Calu3 (cell line): ENCODE measurements at regions of chr1 and their contacts with region 1.

Region 1: DNA sequence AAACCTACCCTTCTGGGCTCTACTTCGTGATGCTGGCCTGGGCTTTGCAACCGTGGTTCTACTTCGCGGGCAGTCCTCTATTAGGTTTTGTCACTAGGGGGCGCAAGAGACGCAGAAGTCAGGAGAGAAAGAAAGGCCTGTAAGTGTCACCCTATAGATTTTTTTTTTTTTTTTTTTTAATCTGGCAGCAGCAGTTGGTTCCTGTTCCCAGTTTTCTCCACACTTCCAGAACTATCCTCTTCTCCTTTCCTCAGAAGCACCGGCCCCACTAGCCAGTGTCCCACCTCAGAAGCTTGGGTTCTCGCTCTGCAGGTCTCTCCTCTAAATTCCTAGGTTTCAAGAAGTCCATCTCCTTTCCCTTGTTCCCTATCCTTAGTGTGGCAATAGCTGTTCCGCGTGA is 9.1 kb upstream of the LCE2D start:
- DNase-seq: peak; percentile 82
- H3K4me3 Mint-ChIP-seq: no peak overlapping the region
- H3K27ac Mint-ChIP-seq: no peak overlapping the region
- H3K4me1 Mint-ChIP-seq: no peaks in the 10 kb centered on the region
- H3K27me3 Mint-ChIP-seq: peaks cover 66% of the 10 kb centered on the region
- CTCF ChIP-seq: peak; percentile 87

Region 2: GRCh38 chr1:152415454-152416227 is 238.5 kb before region 1 on chr1:
- CTCF ChIA-PET with region 1: no interaction called
- intact Hi-C with region 1: no loop called
- DNase-seq: no peak
- H3K4me3 Mint-ChIP-seq: no peak overlapping the region
- H3K27ac Mint-ChIP-seq: no peak overlapping the region
- H3K4me1 Mint-ChIP-seq: no peaks in the 10 kb centered on the region
- H3K27me3 Mint-ChIP-seq: peaks cover 82% of the 10 kb centered on the region
- CTCF ChIP-seq: no peak

Region 3: GRCh38 chr1:152735648-152736047 is 81.5 kb after region 1 on chr1:
- CTCF ChIA-PET with region 1: no interaction called
- intact Hi-C with region 1: loop called (anchors 10 kb)
- DNase-seq: peak; percentile 12
- H3K4me3 Mint-ChIP-seq: no peak overlapping the region
- H3K27ac Mint-ChIP-seq: no peak overlapping the region
- H3K4me1 Mint-ChIP-seq: no peaks in the 10 kb centered on the region
- H3K27me3 Mint-ChIP-seq: peaks cover 79% of the 10 kb centered on the region
- CTCF ChIP-seq: peak; percentile 40

Region 4: GRCh38 chr1:152926091-152926490 is 272.0 kb after region 1 on chr1:
- CTCF ChIA-PET with region 1: no interaction called
- intact Hi-C with region 1: loop called (anchors 5 kb)
- DNase-seq: no peak
- H3K4me3 Mint-ChIP-seq: no peak overlapping the region
- H3K27ac Mint-ChIP-seq: no peak overlapping the region
- H3K4me1 Mint-ChIP-seq: peaks cover 13% of the 10 kb centered on the region
- H3K27me3 Mint-ChIP-seq: no peaks in the 10 kb centered on the region
- CTCF ChIP-seq: peak; percentile 43

Region 5: GRCh38 chr1:153032677-153033308 is 378.7 kb after region 1 on chr1:
- CTCF ChIA-PET with region 1: no interaction called
- intact Hi-C with region 1: loop called (anchors 10 kb)
- DNase-seq: peak; percentile 80
- H3K4me3 Mint-ChIP-seq: no peak overlapping the region
- H3K27ac Mint-ChIP-seq: peak overlapping the region; percentile 53
- H3K4me1 Mint-ChIP-seq: peaks cover 25% of the 10 kb centered on the region
- H3K27me3 Mint-ChIP-seq: no peaks in the 10 kb centered on the region
- CTCF ChIP-seq: peak; percentile 67

Region 6: DNA sequence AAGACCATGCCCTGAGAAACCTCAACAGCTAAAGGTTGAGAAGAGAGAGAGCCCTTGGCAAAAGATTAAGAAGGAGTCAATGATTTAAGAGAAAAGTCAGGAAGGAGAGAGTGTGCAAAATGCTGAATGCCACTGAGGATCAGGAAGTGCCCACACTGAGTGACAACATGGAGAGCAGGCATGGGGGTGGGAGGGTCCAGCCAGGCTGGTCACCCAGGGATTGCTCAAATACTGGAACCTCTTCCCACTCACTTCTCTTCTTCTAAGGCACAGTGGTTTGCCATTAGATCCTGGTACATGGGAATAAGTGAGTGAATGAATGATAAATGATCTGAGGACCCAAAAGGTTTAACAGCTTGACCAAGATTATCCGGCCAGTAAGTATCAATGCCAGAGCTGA is 574.4 kb after region 1 on chr1:
- CTCF ChIA-PET with region 1: interaction called, 3 read pairs
- intact Hi-C with region 1: loop called (anchors 5 kb)
- DNase-seq: no peak
- H3K4me3 Mint-ChIP-seq: no peak overlapping the region
- H3K27ac Mint-ChIP-seq: no peak overlapping the region
- H3K4me1 Mint-ChIP-seq: peaks cover 9% of the 10 kb centered on the region
- H3K27me3 Mint-ChIP-seq: peaks cover 11% of the 10 kb centered on the region
- CTCF ChIP-seq: no peak